Naive thymus-derived CD4-positive, alpha-beta T cell (primary cell): ENCODE measurements at regions of chr3 and their contacts with region 1.

Region 1: DNA sequence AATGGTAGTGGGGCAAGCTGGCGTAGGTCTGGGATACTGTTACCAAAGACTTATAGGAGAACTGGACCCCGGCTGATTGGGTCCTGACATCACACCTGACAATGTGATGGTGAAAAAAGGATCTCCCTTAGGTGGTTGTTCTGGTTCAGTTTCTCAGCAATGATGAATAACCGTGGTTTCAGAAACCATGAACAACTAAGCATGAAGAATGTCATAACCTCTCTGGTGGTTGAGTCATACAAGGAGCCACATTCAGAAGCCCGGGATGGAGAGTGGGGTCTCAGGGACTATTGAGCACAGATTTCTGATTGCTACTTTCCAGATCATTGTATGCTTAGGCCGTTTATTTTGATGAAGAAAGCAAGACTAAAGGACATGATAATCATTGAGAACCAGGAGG is 17.4 kb downstream of the GPR160 start:
- DNase-seq: no peak
- ATAC-seq: no peak
- H3K4me3 ChIP-seq: no peak overlapping the region
- H3K4me3 Mint-ChIP-seq: no peak overlapping the region
- H3K27ac ChIP-seq: no peak overlapping the region
- H3K27ac Mint-ChIP-seq: peak overlapping the region in 2 of 9 donors; percentile 29 to 42
- H3K4me1 ChIP-seq: peaks cover 0 to 7% of the 10 kb centered on the region in 2 donors
- H3K4me1 Mint-ChIP-seq: peaks cover 6 to 37% (median 23%) of the 10 kb centered on the region in 7 donors
- H3K27me3 ChIP-seq: no peaks in the 10 kb centered on the region
- H3K27me3 Mint-ChIP-seq: no peaks in the 10 kb centered on the region

Region 2: DNA sequence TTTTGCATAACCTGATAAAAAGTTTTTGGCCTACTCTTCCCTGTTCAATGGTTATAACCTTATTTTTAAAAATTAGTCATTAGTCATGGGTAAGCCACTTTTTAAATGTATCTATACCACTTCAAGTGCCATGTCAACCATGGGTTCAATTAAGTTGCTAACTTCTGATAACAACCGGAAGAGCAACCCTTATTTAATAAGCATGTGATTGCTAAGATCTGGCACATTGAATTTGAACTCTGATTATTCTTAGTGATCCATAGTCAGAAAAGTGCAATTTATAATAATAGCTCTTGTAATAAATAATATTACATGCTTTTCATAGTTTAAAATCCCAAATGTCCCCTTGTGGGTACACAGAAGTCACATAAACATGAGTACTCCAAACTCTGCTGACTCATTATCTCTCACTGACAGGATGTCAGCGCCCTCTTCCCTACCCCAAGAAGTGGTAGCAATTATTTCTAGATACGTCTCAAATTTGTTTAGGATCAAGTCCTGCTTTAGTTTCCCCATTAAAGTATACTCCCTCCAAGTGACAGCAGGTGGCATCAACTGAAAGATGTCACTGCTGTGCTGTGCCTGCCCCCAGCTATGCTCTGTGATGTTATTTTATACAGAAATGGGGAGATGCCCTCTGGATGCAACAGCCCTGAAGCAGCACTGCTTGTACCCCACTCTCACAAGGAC is 125.2 kb before region 1 on chr3:
- CTCF ChIA-PET with region 1: interaction called, 5 read pairs
- POLR2A ChIA-PET with region 1: no interaction called
- intact Hi-C with region 1: loop called in 1 of 2 experiments (anchors 1 kb)
- DNase-seq: peak in 5 of 9 donors; percentile 7 to 24 (median 16)
- ATAC-seq: peak; percentile 68
- H3K4me3 ChIP-seq: no peak overlapping the region
- H3K4me3 Mint-ChIP-seq: no peak overlapping the region
- H3K27ac ChIP-seq: no peak overlapping the region
- H3K27ac Mint-ChIP-seq: no peak overlapping the region
- H3K4me1 ChIP-seq: no peaks in the 10 kb centered on the region
- H3K4me1 Mint-ChIP-seq: peaks cover 0 to 4% (median 0%) of the 10 kb centered on the region in 7 donors
- H3K27me3 ChIP-seq: no peaks in the 10 kb centered on the region
- H3K27me3 Mint-ChIP-seq: peaks cover 0 to 12% (median 4%) of the 10 kb centered on the region in 5 donors